Cardiac septum (tissue), 1 donor: ENCODE measurements at regions of chr2 and their contacts with region 1.

Region 1: DNA sequence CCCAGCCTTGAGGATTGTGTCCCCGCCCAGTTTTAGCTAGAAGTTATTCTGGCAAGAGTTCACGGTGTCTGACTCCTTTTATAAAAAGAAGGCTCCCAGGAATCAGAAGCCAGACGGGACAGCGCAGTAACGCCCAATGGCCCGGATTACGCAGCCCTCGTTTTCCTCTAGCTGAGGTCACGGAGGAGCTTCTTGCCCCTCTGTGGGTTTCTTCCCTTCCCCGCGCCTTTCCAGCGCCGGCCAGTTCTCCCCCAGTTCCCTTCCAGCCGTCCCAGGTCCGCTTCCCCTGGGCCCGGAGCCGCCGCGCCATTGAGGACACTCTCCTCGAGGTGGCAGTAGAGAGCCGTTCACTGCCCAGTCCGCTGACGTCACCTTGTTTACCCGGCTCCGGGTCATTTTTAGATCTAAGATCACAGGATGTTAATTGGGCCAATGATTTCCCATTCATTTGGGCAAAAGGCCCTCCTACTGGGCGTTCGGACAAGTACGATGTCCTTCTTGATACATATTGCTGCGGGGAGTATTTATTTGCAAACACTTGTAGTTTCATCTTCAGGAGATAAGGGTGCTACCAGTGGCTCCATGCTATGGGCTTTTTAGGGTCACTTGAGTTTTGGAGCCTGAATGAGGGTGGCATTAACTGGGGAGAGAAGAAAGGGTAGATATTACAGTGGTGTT is 81.5 kb upstream of the PPM1B start:
- DNase-seq: peak; percentile 97

Region 2: GRCh38 chr2:43927442-43927841 is 159.7 kb before region 1 on chr2:
- intact Hi-C with region 1: no loop called
- DNase-seq: no peak

Region 3: GRCh38 chr2:44245083-44245861 is 158.1 kb after region 1 on chr2:
- intact Hi-C with region 1: loop called (anchors 5 kb)
- DNase-seq: no peak

Region 4: GRCh38 chr2:44291281-44292248 is 204.4 kb after region 1 on chr2:
- intact Hi-C with region 1: loop called (anchors 2 kb)
- DNase-seq: no peak